ENCODE measurements at regions of chr9 and their contacts with region 1.

Region 1: GRCh38 chr9:72280913-72281500 is 84.0 kb downstream of the ZFAND5 start:
- DNase-seq: no peak
- H3K4me3 ChIP-seq: no peak overlapping the region
- CTCF ChIP-seq: peak; percentile 89

Region 2: GRCh38 chr9:72092820-72093219 is 188.2 kb before region 1 on chr9:
- CTCF ChIA-PET with region 1: no interaction called
- POLR2A ChIA-PET with region 1: no interaction called
- DNase-seq: no peak
- H3K4me3 ChIP-seq: no peak overlapping the region
- CTCF ChIP-seq: no peak

Region 3: GRCh38 chr9:72292256-72292682 is 11.3 kb after region 1 on chr9:
- CTCF ChIA-PET with region 1: interaction called, 101 read pairs
- POLR2A ChIA-PET with region 1: no interaction called
- DNase-seq: no peak
- H3K4me3 ChIP-seq: no peak overlapping the region
- CTCF ChIP-seq: peak; percentile 14

Region 4: GRCh38 chr9:72509635-72510034 is 228.6 kb after region 1 on chr9:
- CTCF ChIA-PET with region 1: no interaction called
- POLR2A ChIA-PET with region 1: no interaction called
- DNase-seq: no peak
- H3K4me3 ChIP-seq: no peak overlapping the region
- CTCF ChIP-seq: no peak

Region 5: GRCh38 chr9:72726947-72727346 is 445.9 kb after region 1 on chr9:
- CTCF ChIA-PET with region 1: interaction called, 17 read pairs
- POLR2A ChIA-PET with region 1: no interaction called
- DNase-seq: no peak
- H3K4me3 ChIP-seq: no peak overlapping the region
- CTCF ChIP-seq: no peak

Region 6: DNA sequence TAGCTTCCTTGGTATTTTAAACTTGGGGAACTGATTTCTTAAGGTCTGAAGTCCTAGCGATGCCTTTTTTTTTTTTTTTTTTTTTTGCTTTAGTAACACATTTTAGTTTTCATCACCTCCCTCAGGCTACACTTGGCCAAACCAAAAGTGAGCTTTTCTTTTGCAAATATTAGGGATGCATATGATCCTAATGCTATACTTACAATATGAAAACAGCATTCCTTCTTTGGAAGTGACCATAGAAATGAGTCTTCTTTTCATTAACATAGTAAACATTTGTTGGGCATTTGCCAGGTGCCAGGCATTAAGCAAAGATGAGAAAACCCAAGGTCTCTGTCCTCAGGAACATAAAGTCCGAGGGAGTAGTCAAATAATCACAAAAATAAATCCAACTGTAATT is 482.0 kb after region 1 on chr9:
- CTCF ChIA-PET with region 1: interaction called, 11 read pairs
- POLR2A ChIA-PET with region 1: no interaction called
- DNase-seq: no peak
- H3K4me3 ChIP-seq: no peak overlapping the region
- CTCF ChIP-seq: no peak

Region 7: DNA sequence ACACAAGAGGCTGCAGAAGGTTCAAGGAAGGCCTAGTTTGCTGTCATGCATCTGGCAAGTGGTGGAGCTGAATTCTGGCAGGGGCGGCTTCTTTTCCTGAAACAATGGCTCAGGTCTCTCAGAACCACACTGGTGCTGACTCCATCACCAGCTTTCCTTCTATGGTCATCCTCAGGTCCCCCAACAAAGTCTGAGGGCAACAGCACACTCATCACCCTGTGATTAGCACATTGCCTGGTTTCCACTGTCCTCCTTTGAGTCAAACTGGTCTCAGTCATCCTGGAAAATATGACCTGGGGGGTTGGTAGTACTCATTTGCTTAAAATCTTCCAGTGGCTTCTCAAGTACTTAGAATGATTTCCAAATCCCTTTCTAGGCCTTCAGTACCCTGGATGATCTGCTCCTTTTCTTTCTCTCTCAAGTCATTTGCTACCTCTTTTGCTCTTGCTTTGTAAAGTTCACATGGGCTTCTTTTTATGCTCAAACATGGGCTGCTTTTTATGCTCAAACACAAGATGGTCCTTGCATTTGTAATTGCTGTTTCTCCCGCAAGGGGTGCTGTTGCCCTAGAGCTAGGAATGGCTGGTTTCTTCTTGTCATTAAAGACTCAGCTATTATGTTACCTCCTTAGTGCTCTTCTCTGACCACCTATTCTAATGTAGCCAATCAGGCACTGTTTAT is 526.9 kb after region 1 on chr9:
- CTCF ChIA-PET with region 1: interaction called, 12 read pairs
- POLR2A ChIA-PET with region 1: no interaction called
- DNase-seq: no peak
- H3K4me3 ChIP-seq: no peak overlapping the region
- CTCF ChIP-seq: no peak

Region 8: DNA sequence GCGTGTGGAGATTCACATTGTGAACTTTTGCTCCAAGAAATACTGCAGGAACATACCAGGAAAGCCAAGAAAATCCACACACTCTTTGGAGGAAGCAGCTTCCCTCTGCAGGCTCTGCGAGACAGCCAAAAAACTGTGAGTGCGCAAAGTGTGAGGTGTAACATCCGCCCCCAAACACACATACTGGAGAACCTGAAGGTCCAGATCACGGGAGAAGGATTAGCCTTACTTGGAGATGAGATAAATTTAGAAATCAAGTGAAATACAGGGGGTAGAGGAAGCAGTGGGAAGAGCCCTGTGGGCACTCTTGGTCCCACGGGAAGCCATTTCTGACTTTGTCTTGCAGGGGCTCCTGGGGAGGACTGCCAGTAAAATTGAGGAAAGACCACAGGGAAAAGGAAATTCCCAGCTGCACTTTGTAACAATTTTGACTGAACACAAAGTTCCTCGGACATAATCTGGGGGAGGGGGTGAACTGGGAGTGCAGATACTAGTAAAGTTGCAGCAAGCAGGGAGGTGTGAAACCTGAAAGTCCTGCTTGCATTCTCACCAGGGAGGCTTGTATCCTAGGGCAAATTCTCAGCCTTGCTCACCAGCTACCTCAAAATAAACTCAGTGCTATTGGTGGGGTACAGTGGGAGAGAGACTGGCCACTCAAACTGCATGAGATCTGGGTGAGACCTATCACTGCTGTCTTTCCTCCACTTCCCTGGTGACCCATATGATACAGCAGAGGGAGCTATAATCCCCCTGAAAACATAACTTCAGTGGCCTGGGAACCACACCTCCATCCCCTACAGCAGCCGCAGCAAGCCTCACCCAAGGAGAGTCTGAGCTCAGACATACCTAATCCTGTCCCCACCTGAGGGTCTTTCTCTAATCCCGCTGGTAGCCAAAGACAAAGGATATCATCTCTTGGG is 562.8 kb after region 1 on chr9:
- CTCF ChIA-PET with region 1: interaction called, 11 read pairs
- POLR2A ChIA-PET with region 1: no interaction called
- DNase-seq: no peak
- H3K4me3 ChIP-seq: no peak overlapping the region
- CTCF ChIP-seq: no peak